WTC11 (cell line): ENCODE measurements at regions of chr17 and their contacts with region 1.

Region 1: GRCh38 chr17:17681187-17681848 is at the start of gene RAI1:
- DNase-seq: peak; percentile 54
- ATAC-seq: peak; percentile 44
- H3K4me3 Mint-ChIP-seq: peak within 1 kb of the TSS; percentile 66
- H3K27ac Mint-ChIP-seq: no peak within 1 kb of the TSS
- H3K4me1 Mint-ChIP-seq: peaks cover 42% of the 10 kb centered on the region
- H3K27me3 Mint-ChIP-seq: peaks cover 87% of the 10 kb centered on the region
- CTCF ChIP-seq: peak; percentile 58; the same call in 1 of the 2 replicates
- total RNA-seq, gene RAI1: 7.3 to 12.7 TPM (median 8.1 TPM) in 3 replicates

Region 2: DNA sequence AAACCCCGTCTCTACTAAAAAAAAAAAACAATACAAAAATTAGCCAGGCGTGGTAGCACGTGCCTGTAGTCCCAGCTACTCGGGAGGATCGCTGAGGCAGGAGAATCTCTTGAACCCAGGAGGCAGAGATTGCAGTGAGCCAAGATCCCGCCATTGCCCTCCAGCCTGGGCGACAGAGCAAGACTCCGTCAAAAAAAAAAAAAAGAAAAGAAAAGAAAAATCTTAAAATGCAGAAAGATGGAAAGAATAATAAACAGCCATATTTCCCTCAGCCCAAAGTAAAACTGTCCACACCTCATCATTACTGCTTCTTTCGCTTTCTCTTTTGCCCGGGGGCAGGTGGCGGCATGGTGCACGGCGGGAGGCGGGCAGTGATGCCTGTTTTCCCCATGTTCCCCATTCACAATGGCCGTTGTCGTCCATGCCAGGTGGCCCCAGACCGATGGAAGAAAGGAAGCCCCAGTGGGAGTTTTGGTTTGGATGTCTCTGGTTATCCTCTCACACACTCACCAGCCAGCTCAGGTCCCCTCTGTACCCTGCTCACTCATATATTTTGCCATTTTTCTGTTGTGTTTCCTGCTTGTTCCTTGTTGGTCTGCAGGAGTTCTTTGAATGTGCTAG is 52.8 kb before region 1 on chr17:
- CTCF ChIA-PET with region 1: no interaction called
- POLR2A ChIA-PET with region 1: no interaction called
- DNase-seq: no peak
- ATAC-seq: no peak
- H3K4me3 Mint-ChIP-seq: no peak overlapping the region
- H3K27ac Mint-ChIP-seq: no peak overlapping the region
- H3K4me1 Mint-ChIP-seq: peaks cover 25% of the 10 kb centered on the region
- H3K27me3 Mint-ChIP-seq: peaks cover 8% of the 10 kb centered on the region
- CTCF ChIP-seq: no peak

Region 3: DNA sequence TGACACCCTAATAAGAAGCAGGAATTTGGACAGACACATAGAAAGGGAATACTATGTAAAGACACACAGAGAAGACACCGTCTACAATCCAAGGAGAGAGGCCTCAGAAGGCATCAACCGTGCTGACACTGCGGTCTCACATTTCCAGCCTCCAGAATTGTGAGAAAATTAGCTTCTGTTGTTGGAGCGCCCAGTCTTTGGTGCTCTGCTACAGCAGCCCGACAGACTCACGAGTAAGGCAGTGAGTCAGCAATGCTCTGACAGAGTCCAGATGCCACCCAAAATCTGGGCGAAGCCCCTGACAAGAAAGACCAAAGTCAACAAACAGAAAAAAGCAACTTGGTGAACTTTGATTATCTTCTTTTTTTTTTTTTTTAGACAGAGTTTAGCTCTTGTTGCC is 32.6 kb before region 1 on chr17:
- CTCF ChIA-PET with region 1: no interaction called
- POLR2A ChIA-PET with region 1: no interaction called
- DNase-seq: no peak
- ATAC-seq: no peak
- H3K4me3 Mint-ChIP-seq: no peak overlapping the region
- H3K27ac Mint-ChIP-seq: no peak overlapping the region
- H3K4me1 Mint-ChIP-seq: no peaks in the 10 kb centered on the region
- H3K27me3 Mint-ChIP-seq: peaks cover 9% of the 10 kb centered on the region
- CTCF ChIP-seq: no peak

Region 4: DNA sequence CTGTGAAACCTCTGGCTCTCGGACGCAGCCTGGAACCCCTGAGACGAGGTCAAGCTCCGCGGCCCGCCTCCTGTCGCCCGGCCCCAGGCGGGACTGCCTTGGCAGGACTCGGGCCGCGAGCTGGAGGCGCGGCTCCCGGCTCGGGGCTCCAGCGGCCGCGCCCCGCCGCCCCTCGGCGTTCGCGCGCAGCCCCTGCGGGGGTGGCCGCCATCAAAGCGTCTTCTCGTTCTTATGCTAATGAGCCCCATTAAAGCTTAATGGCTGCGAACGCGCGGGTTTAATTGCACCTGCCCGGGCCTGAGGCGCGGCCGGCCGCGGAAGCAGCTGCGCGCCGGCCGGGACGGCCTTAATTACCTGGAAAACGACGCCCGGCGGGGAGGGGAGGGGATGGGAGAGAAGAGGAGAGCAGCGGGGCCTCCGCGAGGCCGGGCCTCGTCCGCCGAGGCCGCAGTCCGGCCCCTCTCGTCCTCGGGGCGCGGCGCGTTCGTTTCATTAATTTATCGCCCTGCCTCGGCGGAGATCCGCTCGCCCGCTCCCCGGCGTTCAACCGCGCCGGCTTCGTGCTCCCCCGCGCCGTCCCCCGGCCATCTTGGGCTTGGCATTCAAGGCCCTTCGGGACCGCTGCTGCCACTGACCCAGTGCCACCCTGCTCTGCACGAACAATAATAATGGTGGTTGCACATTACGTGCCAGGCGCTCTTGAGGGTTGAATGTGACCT is 19.1 kb after region 1 on chr17:
- CTCF ChIA-PET with region 1: interaction called, 18 read pairs
- POLR2A ChIA-PET with region 1: no interaction called
- DNase-seq: peak; percentile 83
- ATAC-seq: peak; percentile 73
- H3K4me3 Mint-ChIP-seq: peak overlapping the region; percentile 57
- H3K27ac Mint-ChIP-seq: no peak overlapping the region
- H3K4me1 Mint-ChIP-seq: peaks cover 58% of the 10 kb centered on the region
- H3K27me3 Mint-ChIP-seq: peaks cover 99% of the 10 kb centered on the region
- CTCF ChIP-seq: no peak